GM23248 (cell line): ENCODE measurements at regions of chr12 and their contacts with region 1.

Region 1: GRCh38 chr12:29088611-29089219 is 60.4 kb upstream of the FAR2 start:
- DNase-seq: peak; percentile 58
- H3K4me3 ChIP-seq: no peak overlapping the region
- H3K27ac ChIP-seq: no peak overlapping the region
- H3K4me1 ChIP-seq: no peaks in the 10 kb centered on the region
- H3K27me3 ChIP-seq: no peaks in the 10 kb centered on the region

Region 2: GRCh38 chr12:29255042-29255441 is 166.3 kb after region 1 on chr12:
- in situ Hi-C with region 1: no loop called
- DNase-seq: no peak
- H3K4me3 ChIP-seq: no peak overlapping the region
- H3K27ac ChIP-seq: no peak overlapping the region
- H3K4me1 ChIP-seq: no peaks in the 10 kb centered on the region
- H3K27me3 ChIP-seq: no peaks in the 10 kb centered on the region

Region 3: DNA sequence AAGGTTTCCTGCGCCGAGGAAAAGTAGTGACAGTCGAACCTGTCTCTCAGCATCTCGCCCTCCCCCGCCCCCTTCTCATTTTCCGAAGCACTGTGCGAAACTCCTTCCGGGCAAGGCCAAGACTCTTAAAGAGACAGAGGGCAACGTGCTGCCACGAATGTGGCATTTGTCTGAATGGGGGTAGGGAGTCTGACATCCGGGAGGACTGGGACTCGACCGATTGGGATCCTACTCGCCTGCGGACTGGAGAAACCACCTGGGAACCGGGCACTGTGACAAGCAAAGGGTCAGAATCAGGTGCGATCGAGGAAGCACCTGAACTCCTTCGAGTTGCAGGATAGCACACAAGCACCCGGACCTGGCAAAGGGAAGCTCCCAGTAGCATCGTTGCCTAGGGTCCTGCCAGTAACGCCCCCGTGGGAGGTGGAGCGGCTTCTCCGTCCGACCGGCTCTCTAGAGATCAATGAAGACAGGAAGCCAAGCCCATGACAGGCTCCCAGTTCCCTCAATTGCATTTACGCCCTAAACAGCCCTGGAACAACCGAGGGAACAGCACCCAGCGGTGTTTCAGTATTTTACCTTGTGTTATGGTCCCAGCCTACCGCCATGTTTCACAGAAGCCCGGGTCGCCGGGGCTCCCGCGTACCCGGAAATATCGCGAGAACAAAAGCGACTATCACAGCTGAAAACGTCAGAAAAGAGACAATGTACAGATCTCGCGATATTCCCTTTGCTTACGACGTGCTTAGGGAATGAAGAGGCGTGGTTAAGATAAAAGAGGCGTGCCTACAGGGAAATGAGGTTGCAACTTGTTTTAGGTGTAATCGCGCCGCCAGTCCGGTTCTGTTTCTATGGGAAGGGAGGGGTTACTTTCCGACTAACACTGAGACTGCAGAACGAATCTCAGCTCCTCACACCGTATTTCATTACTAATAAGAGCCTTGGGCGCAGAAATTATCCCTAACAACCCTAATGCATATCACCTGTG is 292.1 kb after region 1 on chr12 and contains the start of gene ERGIC2:
- in situ Hi-C with region 1: loop called (anchors 25 kb)
- DNase-seq: peak; percentile 100
- H3K4me3 ChIP-seq: peak within 1 kb of the TSS; percentile 93
- H3K27ac ChIP-seq: peak within 1 kb of the TSS; percentile 86
- H3K4me1 ChIP-seq: peaks cover 11% of the 10 kb centered on the region; the same call in 1 of the 2 replicates
- H3K27me3 ChIP-seq: no peaks in the 10 kb centered on the region
- total RNA-seq, gene ERGIC2: 171 and 265 TPM in 2 replicates